ENCODE measurements at regions of chr6 and their contacts with region 1.

Region 1: DNA sequence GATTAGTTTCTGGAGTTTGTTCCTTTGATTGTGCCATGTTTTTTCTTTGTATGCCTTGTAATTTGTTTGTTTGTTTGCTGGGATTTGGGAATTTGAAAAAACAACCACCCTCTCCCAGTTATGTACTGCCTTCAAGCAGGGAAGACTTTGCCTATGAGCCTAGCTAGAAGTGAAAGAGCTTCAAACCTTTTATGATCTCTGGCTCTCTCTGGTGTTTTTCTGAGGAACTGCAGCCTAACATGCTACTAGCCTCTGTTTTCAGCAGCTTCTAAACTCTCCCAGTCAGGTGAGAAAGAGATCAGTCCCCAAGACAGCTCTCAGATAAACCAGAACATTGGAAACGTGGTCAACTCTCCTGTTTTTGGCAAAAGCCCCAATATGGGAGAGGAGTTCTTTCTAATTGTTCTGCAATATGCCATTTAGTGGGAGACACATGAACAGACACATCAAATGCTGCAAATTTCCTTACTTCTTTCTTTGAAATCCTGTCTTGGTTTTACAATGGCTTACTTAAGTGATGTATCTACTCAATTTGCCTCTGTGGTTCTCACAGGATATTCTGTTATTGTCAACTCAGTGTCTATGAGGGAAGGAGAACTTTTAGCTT is 58.9 kb upstream of the SERINC1 start:
- H3K4me3 Mint-ChIP-seq: no peak overlapping the region
- H3K27ac Mint-ChIP-seq: no peak overlapping the region
- H3K4me1 Mint-ChIP-seq: no peaks in the 10 kb centered on the region
- H3K27me3 Mint-ChIP-seq: peaks cover 1% of the 10 kb centered on the region

Region 2: GRCh38 chr6:122136386-122136785 is 394.2 kb before region 1 on chr6:
- intact Hi-C with region 1: no loop called
- H3K4me3 Mint-ChIP-seq: no peak overlapping the region
- H3K27ac Mint-ChIP-seq: no peak overlapping the region
- H3K4me1 Mint-ChIP-seq: no peaks in the 10 kb centered on the region
- H3K27me3 Mint-ChIP-seq: no peaks in the 10 kb centered on the region

Region 3: GRCh38 chr6:122381497-122382265 is 148.9 kb before region 1 on chr6:
- intact Hi-C with region 1: loop called (anchors 1 kb)
- H3K4me3 Mint-ChIP-seq: no peak overlapping the region
- H3K27ac Mint-ChIP-seq: no peak overlapping the region
- H3K4me1 Mint-ChIP-seq: peaks cover 2% of the 10 kb centered on the region
- H3K27me3 Mint-ChIP-seq: peaks cover 11% of the 10 kb centered on the region

Measured in dendritic cell treated with granulocyte-macrophage colony-stimulating factor and Interleukin-4, amounts not matched to agents 40 ng/mL and 50 ng/mL, for 4 days (primary cell).